Naive thymus-derived CD4-positive, alpha-beta T cell (primary cell): ENCODE measurements at regions of chr5 and their contacts with region 1.

Region 1: GRCh38 chr5:36305571-36306326 is 4.0 kb upstream of the RANBP3L start:
- DNase-seq: peak in 3 of 9 donors; percentile 3 to 10 (median 4)
- ATAC-seq: peak; percentile 46
- H3K4me3 ChIP-seq: no peak overlapping the region
- H3K4me3 Mint-ChIP-seq: no peak overlapping the region
- H3K27ac ChIP-seq: no peak overlapping the region
- H3K27ac Mint-ChIP-seq: no peak overlapping the region
- H3K4me1 ChIP-seq: no peaks in the 10 kb centered on the region
- H3K4me1 Mint-ChIP-seq: peaks cover 0 to 12% (median 6%) of the 10 kb centered on the region in 7 donors
- H3K27me3 ChIP-seq: no peaks in the 10 kb centered on the region
- H3K27me3 Mint-ChIP-seq: peaks cover 11 to 25% (median 15%) of the 10 kb centered on the region in 5 donors

Region 2: GRCh38 chr5:36214434-36214833 is 91.3 kb before region 1 on chr5:
- CTCF ChIA-PET with region 1: no interaction called
- POLR2A ChIA-PET with region 1: no interaction called
- intact Hi-C with region 1: loop called in 1 of 2 experiments (anchors 10 kb)
- DNase-seq: peak in 1 of 9 donors; percentile 4
- ATAC-seq: no peak
- H3K4me3 ChIP-seq: no peak overlapping the region
- H3K4me3 Mint-ChIP-seq: no peak overlapping the region
- H3K27ac ChIP-seq: no peak overlapping the region
- H3K27ac Mint-ChIP-seq: no peak overlapping the region
- H3K4me1 ChIP-seq: no peaks in the 10 kb centered on the region
- H3K4me1 Mint-ChIP-seq: peaks cover 0 to under 1% (median 0%) of the 10 kb centered on the region in 7 donors
- H3K27me3 ChIP-seq: no peaks in the 10 kb centered on the region
- H3K27me3 Mint-ChIP-seq: no peaks in the 10 kb centered on the region